Right lobe of liver (tissue), 6 donors: ENCODE measurements at regions of chr17 and their contacts with region 1.

Region 1: DNA sequence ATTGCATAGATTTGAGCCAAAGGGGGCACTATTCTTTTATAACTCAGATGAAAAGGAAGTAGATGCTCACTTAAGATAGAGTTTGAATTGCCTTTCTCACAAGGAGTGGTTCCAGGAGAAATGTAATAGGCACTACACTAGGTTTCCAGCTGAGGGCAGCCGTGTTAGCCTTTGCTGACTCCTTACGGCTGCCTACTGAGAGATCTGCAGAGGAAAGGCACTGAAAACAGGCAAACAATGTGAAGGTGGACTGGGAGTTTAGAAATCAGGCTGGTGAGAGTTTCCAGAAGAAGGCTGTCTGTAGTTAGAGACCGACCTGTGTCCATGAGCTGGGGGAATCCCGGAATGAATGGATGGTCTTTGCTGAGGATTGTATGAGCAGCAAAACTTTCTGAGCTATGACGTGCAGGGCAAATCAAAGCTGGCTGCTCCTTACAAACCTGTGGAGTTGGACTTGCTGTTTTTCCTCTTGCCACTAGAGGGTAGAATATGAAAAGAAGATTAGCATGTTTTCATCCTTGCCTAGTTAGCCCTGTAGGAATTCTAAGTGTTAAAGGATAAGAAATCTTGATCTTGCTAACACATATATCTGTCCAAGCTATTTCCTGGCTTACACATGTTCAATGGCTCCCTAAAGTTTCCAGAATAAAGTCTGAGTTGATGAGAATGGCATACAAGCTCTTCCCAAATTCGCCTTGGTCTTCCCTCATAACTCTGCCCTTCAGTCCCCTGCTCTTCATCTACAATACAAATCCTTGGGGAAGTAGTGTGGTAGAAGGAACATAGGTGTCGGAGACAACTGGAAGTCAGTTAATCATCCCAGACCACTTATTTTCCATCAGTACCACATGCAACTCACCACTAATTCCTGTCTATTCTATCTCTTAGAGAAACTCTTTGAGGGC is 20.1 kb upstream of the TAOK1 start:
- DNase-seq: peak in 2 of 3 donors; percentile 40 to 56
- ATAC-seq: peak; percentile 95 to 98 (median 97)
- H3K4me3 ChIP-seq: no peak overlapping the region
- H3K27ac ChIP-seq: no peak overlapping the region
- H3K4me1 ChIP-seq: no peaks in the 10 kb centered on the region
- H3K27me3 ChIP-seq: no peaks in the 10 kb centered on the region
- CTCF ChIP-seq: peak; percentile 70 to 85 (median 76)
- POLR2A ChIP-seq: no peak

Region 2: GRCh38 chr17:29252101-29252866 is 117.8 kb before region 1 on chr17:
- intact Hi-C with region 1: no loop called
- DNase-seq: no peak
- ATAC-seq: peak in 2 of 4 donors; percentile 21 to 37
- H3K4me3 ChIP-seq: no peak overlapping the region
- H3K27ac ChIP-seq: no peak overlapping the region
- H3K4me1 ChIP-seq: peaks cover 0 to 19% (median 1%) of the 10 kb centered on the region in 4 donors
- H3K27me3 ChIP-seq: no peaks in the 10 kb centered on the region
- CTCF ChIP-seq: peak; percentile 10 to 28 (median 26)
- POLR2A ChIP-seq: no peak

Region 3: DNA sequence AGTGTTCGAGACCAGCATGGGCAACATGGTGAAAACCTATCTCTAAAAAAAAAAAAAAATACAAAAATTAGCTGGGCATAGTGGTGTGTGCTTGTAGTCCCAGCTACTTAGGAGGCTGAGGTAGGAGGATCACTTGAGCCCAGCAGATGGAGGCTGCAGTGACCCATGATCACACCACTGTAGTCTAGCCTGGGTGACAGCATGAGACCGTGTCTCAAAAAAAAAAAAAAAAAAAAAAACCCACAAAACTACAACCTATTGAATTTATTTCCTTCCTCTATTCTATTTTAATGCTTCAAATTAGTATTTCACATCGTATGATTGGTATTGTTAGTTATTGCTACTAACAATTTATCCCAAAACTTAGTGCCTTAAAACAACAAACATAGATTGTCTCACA is 66.7 kb before region 1 on chr17:
- intact Hi-C with region 1: no loop called
- DNase-seq: no peak
- ATAC-seq: no peak
- H3K4me3 ChIP-seq: no peak overlapping the region
- H3K27ac ChIP-seq: no peak overlapping the region
- H3K4me1 ChIP-seq: no peaks in the 10 kb centered on the region
- H3K27me3 ChIP-seq: no peaks in the 10 kb centered on the region
- CTCF ChIP-seq: no peak
- POLR2A ChIP-seq: no peak

Region 4: DNA sequence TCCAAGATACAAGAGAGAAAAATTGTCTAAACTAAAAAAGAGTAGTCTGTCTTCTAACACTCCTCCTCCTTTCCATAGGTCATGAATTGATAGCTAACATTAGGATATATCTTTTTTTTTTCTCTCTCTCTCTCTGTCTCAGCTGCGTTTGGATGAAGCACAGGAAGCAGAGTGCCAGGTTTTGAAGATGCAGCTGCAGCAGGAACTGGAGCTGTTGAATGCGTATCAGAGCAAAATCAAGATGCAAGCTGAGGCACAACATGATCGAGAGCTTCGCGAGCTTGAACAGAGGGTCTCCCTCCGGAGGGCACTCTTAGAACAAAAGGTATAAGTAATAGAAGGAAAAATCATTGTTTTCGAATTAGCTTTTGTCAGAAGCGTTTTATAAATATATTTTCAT is 163.9 kb after region 1 on chr17:
- intact Hi-C with region 1: loop called in 1 of 2 experiments (anchors 5 kb)
- DNase-seq: no peak
- ATAC-seq: no peak
- H3K4me3 ChIP-seq: no peak overlapping the region
- H3K27ac ChIP-seq: no peak overlapping the region
- H3K4me1 ChIP-seq: no peaks in the 10 kb centered on the region
- H3K27me3 ChIP-seq: no peaks in the 10 kb centered on the region
- CTCF ChIP-seq: no peak
- POLR2A ChIP-seq: no peak